ENCODE measurements at regions of chr5 and their contacts with region 1.

Region 1: GRCh38 chr5:93607367-93608258 is 24.6 kb downstream of the NR2F1 start:
- DNase-seq: no peak
- ATAC-seq: peak; percentile 53 to 71

Region 2: GRCh38 chr5:93800988-93801811 is 193.6 kb after region 1 on chr5:
- intact Hi-C with region 1: loop called in 1 of 2 experiments (anchors 5 kb)
- DNase-seq: peak; percentile 32
- ATAC-seq: peak; percentile 82 to 92

Region 3: DNA sequence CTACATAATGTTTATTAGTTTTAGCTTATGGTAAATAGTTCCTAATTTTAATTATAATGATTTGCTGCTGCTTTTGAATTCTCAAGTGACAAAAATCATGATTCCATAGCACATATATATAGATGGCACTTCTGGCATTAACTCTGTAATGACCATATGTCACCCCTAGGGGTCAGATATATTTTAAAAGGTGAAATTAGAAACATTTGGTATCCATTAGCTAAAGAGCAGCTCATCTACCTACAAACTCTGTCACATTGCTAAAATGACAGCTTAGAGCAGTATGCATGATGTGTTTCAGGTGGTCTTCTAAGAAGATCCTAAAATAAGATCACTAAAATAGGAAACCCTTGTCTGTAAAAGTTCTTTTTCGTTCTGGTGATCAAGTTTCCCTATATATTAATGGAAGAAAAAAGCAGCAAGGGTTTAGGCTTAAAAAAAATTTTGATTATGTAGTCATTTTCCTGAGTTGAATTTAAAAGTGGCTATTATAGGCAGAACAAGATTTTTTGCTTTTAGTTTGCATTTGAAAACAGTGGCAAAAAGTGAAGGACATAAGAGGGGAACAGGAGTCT is 291.5 kb after region 1 on chr5:
- intact Hi-C with region 1: loop called in 1 of 2 experiments (anchors 10 kb)
- DNase-seq: no peak
- ATAC-seq: no peak